ENCODE measurements at regions of chr15 and their contacts with region 1.

Region 1: DNA sequence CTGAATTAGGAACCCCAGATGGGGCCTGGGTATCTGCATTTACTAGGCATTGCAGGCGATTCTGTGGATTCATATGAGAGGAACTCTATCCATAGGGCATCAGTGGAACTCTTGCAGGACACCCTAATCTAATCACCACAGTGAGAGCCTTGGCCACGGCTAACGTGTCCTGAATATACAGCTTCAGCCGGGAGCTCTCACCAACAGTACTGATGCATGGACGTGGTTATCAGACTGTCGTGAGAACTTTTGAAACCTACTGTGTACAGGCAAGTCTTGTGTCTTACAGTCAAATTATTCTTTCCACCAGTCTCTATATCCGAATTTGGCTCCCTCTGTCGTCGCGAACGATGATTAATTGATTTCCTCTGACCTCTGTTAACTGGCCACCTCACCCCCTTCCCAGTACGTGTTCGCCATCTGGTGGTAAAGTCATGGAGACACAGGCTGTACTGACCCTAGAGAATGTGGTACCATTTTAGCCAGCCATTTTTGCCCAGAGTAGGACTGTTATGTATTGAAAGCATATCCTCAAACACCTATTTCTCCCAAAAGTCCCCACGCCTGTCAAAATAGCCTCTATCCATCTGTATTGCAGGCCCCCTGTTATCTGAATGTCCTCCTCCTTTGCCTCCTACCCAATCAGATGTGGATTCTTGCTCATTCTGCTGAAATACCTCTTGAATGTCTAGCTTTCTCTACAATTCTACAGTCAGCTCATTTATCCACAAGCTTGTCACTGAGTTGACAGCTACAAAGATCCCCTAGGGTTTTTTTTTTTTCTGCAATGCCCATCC is 39.7 kb downstream of the GLDN start:
- DNase-seq: peak; percentile 34
- ATAC-seq: peak; percentile 98
- H3K4me3 ChIP-seq: no peak overlapping the region
- H3K27ac ChIP-seq: no peak overlapping the region
- H3K4me1 ChIP-seq: no peaks in the 10 kb centered on the region
- H3K27me3 ChIP-seq: peaks cover 0 to 6% of the 10 kb centered on the region in 2 experiments; a peak in 3 of 4 replicates
- CTCF ChIP-seq: peak; percentile 81 to 99 (median 97); a peak in 5 of 6 replicates
- EP300 ChIP-seq: no peak
- POLR2A ChIP-seq: no peak
- RAD21 ChIP-seq: peak; percentile 98

Region 2: DNA sequence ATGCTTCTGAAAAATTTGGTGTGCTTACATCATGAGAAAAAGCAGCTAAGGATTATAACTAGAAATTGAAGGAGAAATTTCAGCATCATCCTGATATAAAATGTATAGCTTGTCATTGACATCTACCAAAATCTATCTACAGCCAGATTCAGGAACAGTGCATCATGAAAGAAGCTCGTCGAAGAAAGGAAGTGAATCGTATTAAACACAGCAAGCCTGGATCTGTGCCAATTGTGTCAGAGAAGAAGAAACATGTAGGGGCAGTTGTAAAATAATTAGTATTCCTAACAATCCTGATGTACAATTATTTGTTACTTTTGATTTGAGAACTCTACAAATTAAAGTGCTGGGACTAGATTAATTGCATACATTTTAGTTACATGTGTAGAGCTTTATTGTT is 435.5 kb before region 1 on chr15:
- CTCF ChIA-PET with region 1: no interaction called
- POLR2A ChIA-PET with region 1: no interaction called
- RAD21 ChIA-PET with region 1: no interaction called
- SMC1A ChIA-PET with region 1: no interaction called
- in situ Hi-C with region 1: no loop called
- intact Hi-C with region 1: no loop called
- DNase-seq: no peak
- ATAC-seq: no peak
- H3K4me3 ChIP-seq: no peak overlapping the region
- H3K27ac ChIP-seq: no peak overlapping the region
- H3K4me1 ChIP-seq: no peaks in the 10 kb centered on the region
- H3K27me3 ChIP-seq: no peaks in the 10 kb centered on the region
- CTCF ChIP-seq: no peak
- EP300 ChIP-seq: no peak
- POLR2A ChIP-seq: no peak
- RAD21 ChIP-seq: no peak

Region 3: GRCh38 chr15:51286791-51287190 is 94.4 kb before region 1 on chr15:
- CTCF ChIA-PET with region 1: interaction called, 111 read pairs
- POLR2A ChIA-PET with region 1: no interaction called
- RAD21 ChIA-PET with region 1: interaction called, 32 read pairs
- SMC1A ChIA-PET with region 1: interaction called, 60 read pairs
- in situ Hi-C with region 1: loop called (anchors 5 kb)
- intact Hi-C with region 1: loop called (anchors 1 kb)
- DNase-seq: no peak
- ATAC-seq: peak; percentile 49
- H3K4me3 ChIP-seq: no peak overlapping the region
- H3K27ac ChIP-seq: no peak overlapping the region
- H3K4me1 ChIP-seq: peaks cover 10% of the 10 kb centered on the region
- H3K27me3 ChIP-seq: peaks cover 0 to 1% of the 10 kb centered on the region in 2 experiments; a peak in 3 of 4 replicates
- CTCF ChIP-seq: peak; percentile 14 to 32 (median 20); a peak in 4 of 6 replicates
- EP300 ChIP-seq: no peak
- POLR2A ChIP-seq: no peak
- RAD21 ChIP-seq: peak; percentile 40

Region 4: GRCh38 chr15:51366960-51367648 is 14.1 kb before region 1 on chr15:
- CTCF ChIA-PET with region 1: interaction called, 20 read pairs
- POLR2A ChIA-PET with region 1: interaction called, 3 read pairs
- RAD21 ChIA-PET with region 1: interaction called, 10 read pairs
- SMC1A ChIA-PET with region 1: interaction called, 8 read pairs
- in situ Hi-C with region 1: no loop called
- intact Hi-C with region 1: no loop called
- DNase-seq: no peak
- ATAC-seq: no peak
- H3K4me3 ChIP-seq: no peak overlapping the region
- H3K27ac ChIP-seq: no peak overlapping the region
- H3K4me1 ChIP-seq: peaks cover 4% of the 10 kb centered on the region
- H3K27me3 ChIP-seq: peaks cover 5 to 8% of the 10 kb centered on the region in 2 experiments; a peak in 3 of 4 replicates
- CTCF ChIP-seq: no peak
- EP300 ChIP-seq: no peak
- POLR2A ChIP-seq: no peak
- RAD21 ChIP-seq: no peak

Region 5: DNA sequence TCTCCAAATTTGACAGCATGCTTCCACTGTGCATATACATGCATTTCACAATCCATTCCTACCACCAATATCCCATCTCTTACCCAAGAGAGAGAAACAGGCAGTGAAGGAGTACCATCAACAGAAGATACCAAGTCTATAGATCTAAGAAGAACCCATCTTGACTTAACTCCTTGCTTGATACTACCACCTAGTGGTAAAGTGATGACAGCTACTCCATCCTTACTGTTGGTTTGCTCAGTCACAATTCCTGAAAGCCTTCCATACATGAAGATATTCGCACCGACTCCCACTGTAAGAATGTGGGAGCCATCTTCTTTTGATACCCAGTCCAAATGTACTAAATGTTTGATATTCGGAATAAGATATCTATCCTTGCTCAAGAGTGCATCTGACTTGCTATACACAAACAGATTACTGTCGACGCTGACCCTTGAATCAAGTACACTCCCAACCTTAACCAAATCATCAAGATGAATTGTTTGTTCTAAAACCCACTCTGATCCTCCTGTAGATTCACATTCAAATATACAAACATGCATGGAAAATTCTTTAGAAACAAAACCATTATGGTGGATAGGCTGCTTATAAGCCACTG is 118.3 kb after region 1 on chr15:
- CTCF ChIA-PET with region 1: interaction called, 4 read pairs
- POLR2A ChIA-PET with region 1: no interaction called
- RAD21 ChIA-PET with region 1: no interaction called
- SMC1A ChIA-PET with region 1: interaction called, 3 read pairs
- in situ Hi-C with region 1: no loop called
- intact Hi-C with region 1: loop called (anchors 10 kb)
- DNase-seq: no peak
- ATAC-seq: peak; percentile 87
- H3K4me3 ChIP-seq: no peak overlapping the region
- H3K27ac ChIP-seq: no peak overlapping the region
- H3K4me1 ChIP-seq: no peaks in the 10 kb centered on the region
- H3K27me3 ChIP-seq: no peaks in the 10 kb centered on the region
- CTCF ChIP-seq: peak; percentile 60 to 72 (median 68)
- EP300 ChIP-seq: no peak
- POLR2A ChIP-seq: no peak
- RAD21 ChIP-seq: peak; percentile 65

Region 6: GRCh38 chr15:51516291-51516690 is 135.1 kb after region 1 on chr15:
- CTCF ChIA-PET with region 1: no interaction called
- POLR2A ChIA-PET with region 1: no interaction called
- RAD21 ChIA-PET with region 1: no interaction called
- SMC1A ChIA-PET with region 1: no interaction called
- in situ Hi-C with region 1: no loop called
- intact Hi-C with region 1: no loop called
- DNase-seq: no peak
- ATAC-seq: no peak
- H3K4me3 ChIP-seq: no peak overlapping the region
- H3K27ac ChIP-seq: no peak overlapping the region
- H3K4me1 ChIP-seq: no peaks in the 10 kb centered on the region
- H3K27me3 ChIP-seq: no peaks in the 10 kb centered on the region
- CTCF ChIP-seq: no peak
- EP300 ChIP-seq: no peak
- POLR2A ChIP-seq: no peak
- RAD21 ChIP-seq: no peak

Region 7: GRCh38 chr15:51641528-51642130 is 260.4 kb after region 1 on chr15:
- CTCF ChIA-PET with region 1: no interaction called
- POLR2A ChIA-PET with region 1: no interaction called
- RAD21 ChIA-PET with region 1: no interaction called
- SMC1A ChIA-PET with region 1: no interaction called
- in situ Hi-C with region 1: no loop called
- intact Hi-C with region 1: no loop called
- DNase-seq: no peak
- ATAC-seq: no peak
- H3K4me3 ChIP-seq: no peak overlapping the region
- H3K27ac ChIP-seq: no peak overlapping the region
- H3K4me1 ChIP-seq: no peaks in the 10 kb centered on the region
- H3K27me3 ChIP-seq: no peaks in the 10 kb centered on the region
- CTCF ChIP-seq: no peak
- EP300 ChIP-seq: no peak
- POLR2A ChIP-seq: no peak
- RAD21 ChIP-seq: no peak

Measured in GM12878 (cell line).